ENCODE measurements at regions of chr6 and their contacts with region 1.

Region 1: DNA sequence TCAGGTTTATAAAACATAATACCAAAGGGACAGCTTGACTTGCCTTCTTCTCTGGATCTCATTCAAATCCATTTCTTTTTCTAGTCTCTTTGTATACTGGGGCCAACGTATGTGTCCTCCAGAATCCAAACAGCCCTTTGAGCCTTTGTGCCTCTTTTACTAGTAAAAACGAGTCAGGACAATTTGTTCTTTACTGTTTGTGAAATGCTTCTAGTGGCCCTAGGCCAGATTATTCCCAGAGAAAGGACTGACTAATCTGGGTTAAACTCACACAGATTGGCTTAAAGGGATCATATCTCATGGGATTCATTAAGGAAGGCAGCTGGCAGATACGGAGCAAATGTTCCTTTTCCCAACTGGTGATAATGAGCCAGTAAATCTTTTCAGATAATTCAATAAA is 32.1 kb upstream of the MANEA start:
- DNase-seq: no peak
- ATAC-seq: no peak
- H3K4me3 ChIP-seq: no peak overlapping the region
- H3K4me3 Mint-ChIP-seq: no peak overlapping the region
- H3K27ac ChIP-seq: no peak overlapping the region
- H3K27ac Mint-ChIP-seq: no peak overlapping the region
- H3K4me1 ChIP-seq: no peaks in the 10 kb centered on the region
- H3K4me1 Mint-ChIP-seq: no peaks in the 10 kb centered on the region
- H3K27me3 ChIP-seq: no peaks in the 10 kb centered on the region
- H3K27me3 Mint-ChIP-seq: peaks cover 5% of the 10 kb centered on the region
- CTCF ChIP-seq: no peak

Region 2: GRCh38 chr6:95629551-95629950 is 84.3 kb after region 1 on chr6:
- CTCF ChIA-PET with region 1: no interaction called
- POLR2A ChIA-PET with region 1: no interaction called
- intact Hi-C with region 1: loop called in 1 of 2 experiments (anchors 5 kb)
- DNase-seq: no peak
- ATAC-seq: no peak
- H3K4me3 ChIP-seq: no peak overlapping the region
- H3K4me3 Mint-ChIP-seq: no peak overlapping the region
- H3K27ac ChIP-seq: no peak overlapping the region
- H3K27ac Mint-ChIP-seq: no peak overlapping the region
- H3K4me1 ChIP-seq: no peaks in the 10 kb centered on the region
- H3K4me1 Mint-ChIP-seq: no peaks in the 10 kb centered on the region
- H3K27me3 ChIP-seq: no peaks in the 10 kb centered on the region
- H3K27me3 Mint-ChIP-seq: peaks cover 2% of the 10 kb centered on the region
- CTCF ChIP-seq: no peak

Region 3: DNA sequence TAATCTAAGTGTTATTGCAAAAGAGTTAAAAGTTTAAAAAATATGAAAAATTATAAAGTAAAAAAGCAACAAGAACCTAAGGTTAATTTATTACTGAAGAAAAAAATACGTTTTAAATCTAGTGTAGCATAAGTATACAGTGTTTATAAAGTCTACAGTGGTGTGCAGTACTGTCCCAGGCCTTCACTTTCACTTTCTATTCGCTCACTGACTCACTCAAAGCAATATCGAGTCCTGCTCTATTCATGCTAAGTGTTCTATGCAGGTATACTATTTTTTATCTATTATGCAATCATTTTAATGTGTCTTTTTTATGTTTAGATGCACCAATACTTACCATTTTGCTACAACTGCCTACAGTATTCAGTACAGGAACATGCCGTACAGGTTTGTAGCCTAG is 145.1 kb after region 1 on chr6:
- CTCF ChIA-PET with region 1: no interaction called
- POLR2A ChIA-PET with region 1: no interaction called
- intact Hi-C with region 1: no loop called
- DNase-seq: peak in 1 of 9 experiments; percentile 2
- ATAC-seq: no peak
- H3K4me3 ChIP-seq: no peak overlapping the region
- H3K4me3 Mint-ChIP-seq: peak overlapping the region; percentile 4
- H3K27ac ChIP-seq: no peak overlapping the region
- H3K27ac Mint-ChIP-seq: no peak overlapping the region
- H3K4me1 ChIP-seq: no peaks in the 10 kb centered on the region
- H3K4me1 Mint-ChIP-seq: no peaks in the 10 kb centered on the region
- H3K27me3 ChIP-seq: no peaks in the 10 kb centered on the region
- H3K27me3 Mint-ChIP-seq: no peaks in the 10 kb centered on the region
- CTCF ChIP-seq: no peak